CD14-positive monocyte (primary cell): ENCODE measurements at regions of chr4 and their contacts with region 1.

Region 1: DNA sequence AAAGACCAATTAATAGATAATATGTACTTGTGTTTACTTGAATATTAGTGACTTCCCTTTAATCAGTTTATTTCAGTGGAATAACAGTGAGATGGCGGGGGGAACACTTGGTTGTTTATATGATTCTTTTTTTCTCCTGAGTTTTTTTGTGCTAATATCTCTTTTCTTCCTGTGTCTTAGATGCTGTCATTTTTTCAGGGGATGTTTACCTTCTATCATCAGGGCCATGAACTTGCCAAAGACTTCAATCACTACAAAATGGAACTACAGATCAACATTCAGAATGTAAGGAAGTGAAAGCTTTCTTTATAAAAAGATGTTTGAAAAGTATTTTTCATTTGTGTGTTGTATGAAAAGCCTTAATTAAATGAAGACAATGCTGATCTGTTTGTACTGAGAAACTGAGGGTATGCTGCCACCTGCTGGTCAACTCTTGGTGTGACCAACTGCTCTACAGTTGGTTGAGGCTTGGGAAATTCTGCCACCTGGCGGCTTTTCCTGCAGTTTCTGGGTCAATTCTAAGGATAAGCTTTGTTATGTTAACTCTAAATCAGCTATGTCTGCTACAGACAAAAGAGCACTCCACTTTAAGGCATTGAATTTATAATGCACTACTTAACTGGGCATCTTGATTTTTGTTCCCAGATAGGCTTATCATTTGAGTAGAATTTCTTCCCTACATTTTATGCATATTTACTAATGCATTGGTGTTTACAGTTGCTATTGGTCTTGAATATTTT is 134.8 kb downstream of the ARHGAP10 start:
- DNase-seq: peak; percentile 86 to 94 (median 88)
- H3K4me3 ChIP-seq: no peak overlapping the region
- H3K4me3 Mint-ChIP-seq: no peak overlapping the region
- H3K27ac ChIP-seq: no peak overlapping the region
- H3K27ac Mint-ChIP-seq: no peak overlapping the region
- H3K4me1 ChIP-seq: no peaks in the 10 kb centered on the region
- H3K4me1 Mint-ChIP-seq: no peaks in the 10 kb centered on the region
- H3K27me3 ChIP-seq: no peaks in the 10 kb centered on the region
- H3K27me3 Mint-ChIP-seq: peaks cover 0 to 3% (median 0%) of the 10 kb centered on the region in 3 donors
- CTCF ChIP-seq: peak; percentile 99

Region 2: DNA sequence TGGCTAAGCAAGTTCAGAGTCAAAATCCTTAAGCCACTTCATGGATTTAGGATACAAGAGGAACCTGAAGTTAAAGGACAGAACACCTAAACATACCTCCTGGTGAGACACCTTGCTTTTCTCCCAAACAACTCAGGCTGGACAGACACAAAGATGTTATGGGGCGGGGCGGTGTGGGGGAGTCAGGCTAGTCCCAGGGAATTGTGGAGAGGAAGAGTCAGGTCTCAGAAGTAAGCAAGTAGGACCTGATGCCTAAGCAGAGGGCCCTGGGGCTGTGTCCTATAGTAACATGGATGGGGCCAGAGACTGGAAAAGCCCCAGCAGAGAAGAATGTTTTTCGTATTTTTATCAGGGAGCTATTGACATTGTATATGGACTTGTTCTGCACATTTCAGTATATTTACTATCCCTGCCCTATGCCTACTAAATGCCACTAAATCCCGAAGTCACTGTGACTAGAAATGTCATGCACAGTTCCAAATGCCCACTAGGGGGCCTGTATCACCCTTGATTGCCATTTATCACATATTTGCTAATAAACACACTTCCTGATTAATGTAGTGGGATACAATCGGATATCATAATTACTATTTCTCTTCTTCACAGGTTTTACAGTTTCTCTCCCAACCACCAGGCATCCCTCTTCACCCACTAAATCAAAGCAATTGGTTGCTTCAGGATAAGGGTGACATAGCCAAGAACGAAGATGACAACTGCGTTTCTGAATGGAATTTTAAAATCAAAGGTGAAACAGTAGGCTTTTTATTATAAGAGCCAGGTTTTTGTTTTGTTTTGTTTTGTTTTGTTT is 158.6 kb before region 1 on chr4:
- intact Hi-C with region 1: loop called (anchors 2 to 5 kb)
- DNase-seq: peak; percentile 51 to 80 (median 66)
- H3K4me3 ChIP-seq: no peak overlapping the region
- H3K4me3 Mint-ChIP-seq: no peak overlapping the region
- H3K27ac ChIP-seq: no peak overlapping the region
- H3K27ac Mint-ChIP-seq: no peak overlapping the region
- H3K4me1 ChIP-seq: no peaks in the 10 kb centered on the region
- H3K4me1 Mint-ChIP-seq: peaks cover 6% of the 10 kb centered on the region
- H3K27me3 ChIP-seq: no peaks in the 10 kb centered on the region
- H3K27me3 Mint-ChIP-seq: peaks cover 1 to 7% (median 6%) of the 10 kb centered on the region in 3 donors
- CTCF ChIP-seq: peak; percentile 90

Region 3: GRCh38 chr4:147731580-147732517 is 134.9 kb before region 1 on chr4 and contains the start of gene ARHGAP10:
- intact Hi-C with region 1: loop called in 1 of 2 experiments (anchors 10 kb)
- DNase-seq: peak; percentile 74 to 82 (median 79)
- H3K4me3 ChIP-seq: peak within 1 kb of the TSS; percentile 70 to 87 (median 78)
- H3K4me3 Mint-ChIP-seq: peak within 1 kb of the TSS; percentile 97 to 98
- H3K27ac ChIP-seq: peak within 1 kb of the TSS; percentile 0 to 69
- H3K27ac Mint-ChIP-seq: peak within 1 kb of the TSS; percentile 43 to 90 (median 78)
- H3K4me1 ChIP-seq: peaks cover 19 to 31% of the 10 kb centered on the region in 2 donors
- H3K4me1 Mint-ChIP-seq: peaks cover 26% of the 10 kb centered on the region
- H3K27me3 ChIP-seq: peaks cover 0 to 5% of the 10 kb centered on the region in 2 donors
- H3K27me3 Mint-ChIP-seq: peaks cover 5 to 17% (median 14%) of the 10 kb centered on the region in 3 donors
- CTCF ChIP-seq: no peak
- polyA plus RNA-seq, gene ARHGAP10: 1.7 to 4.3 (median 3.0) TPM

Region 4: GRCh38 chr4:147831551-147832177 is 35.0 kb before region 1 on chr4:
- intact Hi-C with region 1: loop called in 1 of 2 experiments (anchors 5 kb)
- DNase-seq: peak; percentile 93 to 98 (median 97)
- H3K4me3 ChIP-seq: peak overlapping the region in 1 of 3 experiments; percentile 56
- H3K4me3 Mint-ChIP-seq: peak overlapping the region; percentile 64 to 84
- H3K27ac ChIP-seq: peak overlapping the region; percentile 91 to 99
- H3K27ac Mint-ChIP-seq: peak overlapping the region; percentile 97 to 99 (median 98)
- H3K4me1 ChIP-seq: peaks cover 52 to 59% of the 10 kb centered on the region in 2 donors
- H3K4me1 Mint-ChIP-seq: peaks cover 56% of the 10 kb centered on the region
- H3K27me3 ChIP-seq: no peaks in the 10 kb centered on the region
- H3K27me3 Mint-ChIP-seq: no peaks in the 10 kb centered on the region
- CTCF ChIP-seq: no peak

Region 5: DNA sequence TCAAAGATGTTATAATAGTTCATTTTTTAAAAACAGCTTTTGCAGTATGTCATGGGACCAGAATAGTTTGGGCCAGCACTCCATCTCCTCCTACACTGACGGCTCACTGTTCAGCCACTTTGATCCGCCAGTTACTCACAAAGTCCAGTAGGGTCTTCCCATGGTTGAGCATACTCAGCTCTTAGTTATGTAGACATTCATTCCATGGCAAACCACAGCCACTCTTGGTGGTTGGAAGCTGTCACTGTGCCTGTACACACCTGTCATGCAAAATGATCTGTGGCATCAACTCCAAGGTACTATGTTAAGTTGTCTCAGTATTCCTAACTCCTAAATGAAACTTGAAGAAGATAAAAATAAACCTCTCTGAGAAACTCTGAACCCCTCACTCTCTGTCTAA is 448.3 kb after region 1 on chr4:
- intact Hi-C with region 1: no loop called
- DNase-seq: no peak
- H3K4me3 ChIP-seq: no peak overlapping the region
- H3K4me3 Mint-ChIP-seq: no peak overlapping the region
- H3K27ac ChIP-seq: no peak overlapping the region
- H3K27ac Mint-ChIP-seq: no peak overlapping the region
- H3K4me1 ChIP-seq: no peaks in the 10 kb centered on the region
- H3K4me1 Mint-ChIP-seq: no peaks in the 10 kb centered on the region
- H3K27me3 ChIP-seq: no peaks in the 10 kb centered on the region
- H3K27me3 Mint-ChIP-seq: peaks cover 0 to 2% (median 0%) of the 10 kb centered on the region in 3 donors
- CTCF ChIP-seq: no peak